Activated CD4-positive, alpha-beta T cell treated with anti-CD3 and anti-CD28 coated beads, Interleukin-2, amount 10 ng/mL, durations not matched to agents 24 days and 14 days (primary cell): ENCODE measurements at regions of chr13 and their contacts with region 1.

Region 1: DNA sequence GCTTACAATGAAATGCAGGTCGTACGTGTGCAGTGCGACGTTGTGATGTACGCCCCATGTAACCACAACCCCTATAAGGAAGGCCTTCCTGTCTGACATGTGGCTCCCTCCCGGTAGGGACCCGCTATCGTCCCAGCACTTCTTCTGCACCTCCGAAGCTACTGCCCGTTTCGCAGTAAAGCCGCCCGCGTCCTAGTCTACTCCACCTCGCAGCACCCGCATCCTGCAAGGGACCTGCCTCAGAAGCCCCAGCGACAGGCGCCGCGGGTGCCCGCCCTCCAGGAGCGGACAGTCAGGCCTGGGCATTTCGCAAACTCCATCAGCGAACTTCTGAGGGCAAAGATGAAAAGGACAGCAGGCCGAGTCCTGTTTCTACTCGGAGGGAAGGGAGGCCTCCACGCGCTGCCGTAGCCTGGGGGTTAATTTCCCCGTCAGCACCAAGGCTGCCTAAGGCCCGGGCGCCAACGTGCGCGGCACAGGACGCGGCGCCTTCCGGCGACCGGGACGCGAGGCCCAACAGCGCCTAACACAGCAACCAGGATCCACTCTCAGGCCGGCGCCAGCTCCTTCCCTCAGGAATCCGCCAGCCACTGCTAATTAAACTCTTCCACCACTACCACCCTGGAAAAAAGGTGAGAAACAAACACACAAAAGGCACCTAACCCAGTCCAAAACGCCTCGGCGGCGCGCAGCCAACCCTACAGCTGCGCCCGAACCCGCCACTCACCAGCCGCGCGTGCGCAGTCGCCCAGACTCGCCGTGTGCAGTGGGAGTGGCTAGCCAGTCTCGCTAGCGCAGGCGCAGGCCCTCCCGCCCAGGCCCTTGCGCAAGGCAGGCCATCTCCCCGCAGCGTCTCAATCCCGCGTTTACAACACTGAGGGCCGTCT is at the start of gene EEF1AKMT1:
- DNase-seq: peak; percentile 99
- H3K4me3 Mint-ChIP-seq: peak within 1 kb of the TSS; percentile 87
- H3K27ac Mint-ChIP-seq: peak within 1 kb of the TSS; percentile 98
- H3K4me1 Mint-ChIP-seq: peaks cover 26% of the 10 kb centered on the region
- H3K27me3 Mint-ChIP-seq: no peaks in the 10 kb centered on the region
- total RNA-seq, gene EEF1AKMT1: 12.0 and 14.6 TPM in 2 replicates

Region 2: GRCh38 chr13:19863323-19864023 is 910.0 kb before region 1 on chr13 and contains the start of gene ZMYM5:
- intact Hi-C with region 1: loop called (anchors 5 kb)
- DNase-seq: peak; percentile 99
- H3K4me3 Mint-ChIP-seq: peak within 1 kb of the TSS; percentile 98
- H3K27ac Mint-ChIP-seq: peak within 1 kb of the TSS; percentile 98
- H3K4me1 Mint-ChIP-seq: peaks cover 34% of the 10 kb centered on the region
- H3K27me3 Mint-ChIP-seq: no peaks in the 10 kb centered on the region
- total RNA-seq, gene ZMYM5: 12.9 and 13.4 TPM in 2 replicates

Region 3: GRCh38 chr13:20525690-20526544 is 247.5 kb before region 1 on chr13 and contains the start of gene CRYL1:
- intact Hi-C with region 1: loop called (anchors 1 kb)
- DNase-seq: peak; percentile 92
- H3K4me3 Mint-ChIP-seq: peak within 1 kb of the TSS; percentile 79
- H3K27ac Mint-ChIP-seq: peak within 1 kb of the TSS; percentile 79
- H3K4me1 Mint-ChIP-seq: peaks cover 19% of the 10 kb centered on the region
- H3K27me3 Mint-ChIP-seq: no peaks in the 10 kb centered on the region
- total RNA-seq, gene CRYL1: 5.8 and 7.1 TPM in 2 replicates

Region 4: DNA sequence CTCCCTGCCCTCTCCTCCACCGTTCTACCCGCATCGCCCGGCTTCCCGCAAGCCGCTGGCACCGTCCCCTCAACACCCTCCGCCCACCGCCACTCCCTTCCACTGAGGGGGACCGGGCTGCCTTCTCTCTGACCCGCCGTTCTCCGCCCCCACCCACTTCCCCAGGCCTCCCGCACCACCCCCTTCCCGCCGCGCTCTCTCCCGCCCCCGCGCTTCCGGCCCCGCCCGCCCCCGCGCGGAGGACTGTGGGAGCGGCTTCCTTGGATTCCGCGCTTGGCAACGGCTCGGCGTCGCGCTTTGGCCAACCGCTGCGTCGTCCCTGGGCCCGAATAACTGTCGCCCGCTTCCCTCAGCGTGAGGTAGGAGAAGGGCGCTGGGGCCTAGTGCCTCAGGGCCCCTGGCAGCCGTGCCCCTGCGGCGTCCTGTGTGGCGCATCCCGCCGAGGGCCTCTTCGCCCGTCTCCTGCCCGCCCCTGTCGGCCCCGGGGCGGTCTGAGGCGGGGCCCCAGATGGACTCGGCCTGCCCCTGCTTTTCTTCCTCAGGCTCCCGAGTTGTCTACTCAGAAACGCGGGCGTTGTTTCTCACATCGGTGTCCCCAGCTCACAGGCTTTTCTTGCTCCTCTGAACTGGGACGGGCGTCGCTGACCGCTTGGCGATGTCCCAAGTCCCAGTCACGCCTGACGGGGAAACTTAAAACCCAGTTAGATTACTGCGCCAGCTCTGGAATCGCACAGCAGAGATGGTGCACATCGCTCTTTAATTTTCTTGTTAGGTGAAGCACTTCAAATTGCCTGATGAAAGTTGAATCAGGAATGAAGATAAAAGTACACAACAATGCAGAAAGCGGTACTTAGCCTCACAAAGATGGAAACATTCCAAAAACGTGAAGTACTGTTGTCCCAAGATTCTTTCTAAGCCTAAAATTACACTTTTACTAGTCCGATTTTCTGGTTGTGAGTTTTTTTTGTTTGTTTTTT is 206.3 kb before region 1 on chr13 and contains the start of gene IFT88:
- intact Hi-C with region 1: loop called (anchors 2 kb)
- DNase-seq: peak; percentile 97
- H3K4me3 Mint-ChIP-seq: peak within 1 kb of the TSS; percentile 91
- H3K27ac Mint-ChIP-seq: peak within 1 kb of the TSS; percentile 88
- H3K4me1 Mint-ChIP-seq: peaks cover 23% of the 10 kb centered on the region
- H3K27me3 Mint-ChIP-seq: no peaks in the 10 kb centered on the region
- total RNA-seq, gene IFT88: 2.2 and 2.9 TPM in 2 replicates

Region 5: DNA sequence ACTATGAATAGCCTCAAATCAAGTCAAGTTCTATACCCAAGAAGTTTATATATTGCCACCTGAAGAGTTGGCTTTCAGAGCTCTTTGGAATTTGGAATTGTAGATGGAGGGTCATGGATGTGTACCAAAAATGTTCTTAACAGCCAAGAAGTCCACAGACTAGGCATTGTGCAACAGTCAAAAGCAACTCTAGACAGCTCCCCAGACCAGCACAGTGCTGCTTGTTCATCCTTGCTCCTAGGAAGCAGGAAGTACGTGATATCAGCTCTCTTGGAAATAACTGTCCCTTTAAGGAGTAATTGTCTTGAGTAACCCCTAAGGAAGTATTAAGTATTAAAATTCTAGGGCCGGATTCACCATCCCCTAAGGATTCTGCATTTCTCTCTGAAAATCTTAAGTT is 100.7 kb before region 1 on chr13:
- intact Hi-C with region 1: no loop called
- DNase-seq: peak; percentile 32
- H3K4me3 Mint-ChIP-seq: no peak overlapping the region
- H3K27ac Mint-ChIP-seq: no peak overlapping the region
- H3K4me1 Mint-ChIP-seq: no peaks in the 10 kb centered on the region
- H3K27me3 Mint-ChIP-seq: no peaks in the 10 kb centered on the region

Region 6: GRCh38 chr13:20828539-20829364 is 55.3 kb after region 1 on chr13:
- intact Hi-C with region 1: loop called (anchors 5 kb)
- DNase-seq: peak; percentile 86
- H3K4me3 Mint-ChIP-seq: no peak overlapping the region
- H3K27ac Mint-ChIP-seq: no peak overlapping the region
- H3K4me1 Mint-ChIP-seq: peaks cover 7% of the 10 kb centered on the region
- H3K27me3 Mint-ChIP-seq: no peaks in the 10 kb centered on the region

Region 7: DNA sequence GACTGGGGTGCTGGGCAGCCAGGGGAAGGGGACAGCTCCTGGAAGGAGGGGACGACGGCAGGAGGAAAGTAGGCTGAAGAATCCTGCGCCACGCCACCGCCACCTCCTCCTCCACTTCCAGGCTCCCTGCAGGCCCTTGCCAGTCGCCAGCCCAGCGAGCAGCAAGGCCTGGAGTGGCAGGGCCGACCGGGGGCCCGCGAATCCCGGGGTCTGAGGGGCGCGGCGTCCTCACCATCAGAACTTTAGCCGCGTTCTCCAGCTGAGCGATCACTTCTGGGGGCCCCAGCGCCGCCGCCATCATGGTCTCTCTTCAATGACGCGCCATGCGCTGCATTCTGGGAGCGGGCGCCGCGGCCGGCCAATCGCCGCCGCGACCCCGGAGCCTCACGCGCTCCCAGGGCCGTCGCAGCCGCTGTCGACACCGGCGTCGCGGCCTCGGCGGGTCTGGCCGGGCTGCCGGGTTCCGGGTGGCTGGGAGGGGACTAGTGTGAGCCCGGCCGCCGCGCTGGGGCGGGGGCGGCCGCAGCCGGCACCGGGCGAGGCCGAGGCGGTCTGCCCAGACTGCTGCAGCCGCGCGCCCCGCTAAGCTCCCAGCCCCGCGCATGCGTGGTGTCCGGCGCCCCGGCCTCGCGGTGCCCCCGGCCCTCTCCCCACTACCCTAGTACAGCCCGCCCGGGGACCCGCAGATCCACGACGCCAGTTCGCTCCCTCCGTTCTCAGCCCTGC is 129.2 kb after region 1 on chr13 and contains the start of gene XPO4:
- intact Hi-C with region 1: loop called (anchors 1 kb)
- DNase-seq: peak; percentile 95
- H3K4me3 Mint-ChIP-seq: peak within 1 kb of the TSS; percentile 99
- H3K27ac Mint-ChIP-seq: peak within 1 kb of the TSS; percentile 97
- H3K4me1 Mint-ChIP-seq: peaks cover 26% of the 10 kb centered on the region
- H3K27me3 Mint-ChIP-seq: peaks cover 2% of the 10 kb centered on the region
- total RNA-seq, gene XPO4: 32.5 and 34.8 TPM in 2 replicates